CD14-positive monocyte (primary cell): ENCODE measurements at regions of chr19 and their contacts with region 1.

Region 1: DNA sequence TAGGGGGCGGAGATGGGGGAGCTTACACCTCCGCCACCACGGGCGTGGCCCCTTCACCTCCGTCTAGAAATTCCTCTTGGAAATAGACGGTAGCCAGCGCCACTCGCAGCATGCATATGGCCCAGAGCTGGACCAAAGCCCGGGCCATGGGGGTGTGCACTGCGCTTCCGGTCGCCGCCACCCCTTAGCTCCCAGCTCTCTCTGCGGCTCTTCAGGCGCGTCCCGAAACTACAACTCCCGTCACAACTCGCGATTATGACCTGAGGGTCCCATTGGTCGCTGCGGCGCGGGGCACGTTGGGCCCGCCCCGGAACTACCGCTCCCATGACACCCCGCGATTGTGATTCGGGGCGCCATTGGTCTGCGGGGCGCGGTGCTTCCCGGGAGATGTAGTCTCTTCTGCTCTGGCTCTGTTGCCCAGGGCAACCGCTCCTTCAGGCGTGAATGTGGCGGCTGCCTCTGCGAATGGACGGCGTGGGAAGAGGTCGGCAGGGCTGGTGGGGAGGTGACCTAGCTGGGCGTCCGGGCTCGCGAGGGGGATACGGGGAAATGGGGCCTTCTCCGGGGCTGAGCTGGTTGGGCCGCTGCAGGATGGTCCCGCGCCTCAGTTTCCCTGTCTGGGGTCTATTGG is at the starts of genes C19orf44 and CALR3:
- DNase-seq: peak; percentile 97 to 99 (median 97)
- H3K4me3 ChIP-seq: peak within 1 kb of the TSS; percentile 63 to 80 (median 71)
- H3K4me3 Mint-ChIP-seq: peak within 1 kb of the TSS; percentile 87 to 91
- H3K27ac ChIP-seq: peak within 1 kb of the TSS in 1 of 2 donors; percentile 58
- H3K27ac Mint-ChIP-seq: peak within 1 kb of the TSS in 6 of 7 donors; percentile 60 to 85 (median 76)
- H3K4me1 ChIP-seq: peaks cover 10 to 14% of the 10 kb centered on the region in 2 donors
- H3K4me1 Mint-ChIP-seq: peaks cover 10% of the 10 kb centered on the region
- H3K27me3 ChIP-seq: no peaks in the 10 kb centered on the region
- H3K27me3 Mint-ChIP-seq: peaks cover 0 to 1% (median 1%) of the 10 kb centered on the region in 3 donors
- CTCF ChIP-seq: no peak
- polyA plus RNA-seq, gene C19orf44: 0.58 to 0.65 TPM in 2 of 3 donors, not detected in the other
- polyA plus RNA-seq, gene CALR3: not detected

Region 2: DNA sequence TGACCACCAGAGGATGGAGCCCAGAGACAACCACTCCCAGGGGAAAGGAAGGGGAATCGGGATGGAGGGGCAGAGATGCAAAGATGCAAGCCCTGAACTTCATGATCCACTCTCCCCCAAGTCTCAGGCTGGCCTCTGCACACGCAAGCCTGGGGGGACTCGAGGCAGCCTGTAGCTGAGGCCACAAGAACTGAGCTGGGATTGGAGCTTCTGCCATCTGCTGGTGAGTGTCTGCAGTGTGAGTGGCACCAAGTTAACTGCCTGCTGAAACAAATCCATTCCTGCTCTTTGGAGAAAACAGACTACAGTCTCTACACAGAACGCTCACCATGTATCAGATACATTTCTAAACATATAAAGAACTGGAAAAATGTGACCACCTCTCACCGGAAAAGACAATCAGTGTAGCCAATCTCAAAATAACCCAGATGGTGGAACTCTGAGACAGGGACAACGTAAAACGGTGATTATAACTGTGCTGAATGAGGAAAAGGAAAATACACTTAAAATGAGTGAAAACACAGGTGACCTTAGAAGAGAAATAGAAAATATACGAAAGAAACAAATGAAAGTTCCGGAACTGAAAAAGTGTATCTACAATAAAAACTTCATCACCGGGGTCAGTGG is 109.4 kb before region 1 on chr19:
- intact Hi-C with region 1: no loop called
- DNase-seq: peak; percentile 44 to 60 (median 47)
- H3K4me3 ChIP-seq: no peak overlapping the region
- H3K4me3 Mint-ChIP-seq: no peak overlapping the region
- H3K27ac ChIP-seq: no peak overlapping the region
- H3K27ac Mint-ChIP-seq: peak overlapping the region in 1 of 7 donors; percentile 5
- H3K4me1 ChIP-seq: peaks cover 16 to 21% of the 10 kb centered on the region in 2 donors
- H3K4me1 Mint-ChIP-seq: peaks cover 22% of the 10 kb centered on the region
- H3K27me3 ChIP-seq: no peaks in the 10 kb centered on the region
- H3K27me3 Mint-ChIP-seq: no peaks in the 10 kb centered on the region
- CTCF ChIP-seq: peak; percentile 73

Region 3: GRCh38 chr19:16400911-16401591 is 95.0 kb before region 1 on chr19:
- intact Hi-C with region 1: no loop called
- DNase-seq: no peak
- H3K4me3 ChIP-seq: no peak overlapping the region
- H3K4me3 Mint-ChIP-seq: no peak overlapping the region
- H3K27ac ChIP-seq: peak overlapping the region in 1 of 2 donors; percentile 95
- H3K27ac Mint-ChIP-seq: peak overlapping the region; percentile 43 to 90 (median 75)
- H3K4me1 ChIP-seq: peaks cover 13 to 15% of the 10 kb centered on the region in 2 donors
- H3K4me1 Mint-ChIP-seq: peaks cover 11% of the 10 kb centered on the region
- H3K27me3 ChIP-seq: no peaks in the 10 kb centered on the region
- H3K27me3 Mint-ChIP-seq: peaks cover 0 to 4% (median 1%) of the 10 kb centered on the region in 3 donors
- CTCF ChIP-seq: no peak

Region 4: GRCh38 chr19:16446724-16447368 is 49.3 kb before region 1 on chr19:
- intact Hi-C with region 1: loop called in 1 of 2 experiments (anchors 5 kb)
- DNase-seq: peak; percentile 74 to 87 (median 81)
- H3K4me3 ChIP-seq: peak overlapping the region in 1 of 3 experiments; percentile 16
- H3K4me3 Mint-ChIP-seq: peak overlapping the region; percentile 40 to 76
- H3K27ac ChIP-seq: peak overlapping the region; percentile 70 to 81
- H3K27ac Mint-ChIP-seq: peak overlapping the region; percentile 96 to 99 (median 98)
- H3K4me1 ChIP-seq: peaks cover 77 to 83% of the 10 kb centered on the region in 2 donors
- H3K4me1 Mint-ChIP-seq: peaks cover 84% of the 10 kb centered on the region
- H3K27me3 ChIP-seq: no peaks in the 10 kb centered on the region
- H3K27me3 Mint-ChIP-seq: no peaks in the 10 kb centered on the region
- CTCF ChIP-seq: no peak

Region 5: DNA sequence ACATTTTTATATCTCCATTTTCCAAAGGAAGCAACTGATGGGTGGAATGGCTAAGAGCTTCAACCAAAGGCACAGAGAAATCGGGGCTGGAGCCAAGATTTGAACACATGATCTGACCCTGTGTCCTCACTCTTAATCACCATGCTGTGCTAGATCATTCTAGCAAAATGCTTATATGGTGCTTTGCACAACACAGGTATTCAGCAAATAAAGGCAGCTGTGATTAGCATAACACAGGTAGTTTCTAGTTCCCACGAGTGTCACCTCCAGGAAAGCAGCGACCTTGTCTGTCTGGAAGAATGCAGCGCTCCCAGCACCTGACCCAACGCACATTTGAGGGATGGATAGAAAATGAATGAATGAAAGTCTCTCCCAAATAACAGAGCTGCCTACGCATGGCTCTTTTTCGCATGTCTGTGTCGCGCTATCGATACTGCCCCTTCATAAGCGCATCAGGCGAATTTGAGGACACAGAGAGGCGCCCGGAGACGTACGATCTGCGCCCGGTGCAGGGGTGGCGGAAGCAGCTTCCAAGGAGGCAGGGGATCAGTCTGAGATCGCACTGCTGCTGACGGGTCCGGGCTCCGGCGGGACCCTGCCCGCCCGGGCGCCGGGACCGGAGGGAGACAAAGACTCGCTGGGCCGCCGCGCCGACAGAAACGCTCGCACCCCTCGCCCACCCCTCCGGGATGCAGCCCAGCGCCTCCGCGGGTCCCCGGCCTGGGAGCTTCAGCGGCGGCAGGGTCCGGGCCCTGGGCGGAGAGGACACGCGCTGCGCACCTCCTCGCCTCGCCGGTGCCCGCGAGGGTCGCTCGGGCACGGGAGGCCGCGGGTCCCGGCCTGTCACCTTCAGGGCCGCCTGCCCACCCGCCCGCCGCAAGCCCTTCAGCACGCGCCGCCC is 24.9 kb before region 1 on chr19:
- intact Hi-C with region 1: loop called in 1 of 2 experiments (anchors 2 kb)
- DNase-seq: peak in 1 of 3 donors; percentile 16
- H3K4me3 ChIP-seq: peak overlapping the region; percentile 58 to 89 (median 67)
- H3K4me3 Mint-ChIP-seq: peak overlapping the region; percentile 85 to 92
- H3K27ac ChIP-seq: peak overlapping the region in 1 of 2 donors; percentile 59
- H3K27ac Mint-ChIP-seq: peak overlapping the region in 5 of 7 donors; percentile 62 to 82 (median 71)
- H3K4me1 ChIP-seq: peaks cover 22 to 30% of the 10 kb centered on the region in 2 donors
- H3K4me1 Mint-ChIP-seq: peaks cover 31% of the 10 kb centered on the region
- H3K27me3 ChIP-seq: no peaks in the 10 kb centered on the region
- H3K27me3 Mint-ChIP-seq: peaks cover 0 to 2% (median 0%) of the 10 kb centered on the region in 3 donors
- CTCF ChIP-seq: no peak

Region 6: GRCh38 chr19:16542045-16542909 is 46.2 kb after region 1 on chr19 and contains the start of gene CHERP:
- intact Hi-C with region 1: loop called (anchors 5 kb)
- DNase-seq: peak; percentile 91 to 95 (median 93)
- H3K4me3 ChIP-seq: peak within 1 kb of the TSS; percentile 73 to 99 (median 86)
- H3K4me3 Mint-ChIP-seq: peak within 1 kb of the TSS; percentile 87 to 92
- H3K27ac ChIP-seq: peak within 1 kb of the TSS; percentile 63 to 90
- H3K27ac Mint-ChIP-seq: peak within 1 kb of the TSS; percentile 79 to 91 (median 88)
- H3K4me1 ChIP-seq: peaks cover 18 to 26% of the 10 kb centered on the region in 2 donors
- H3K4me1 Mint-ChIP-seq: peaks cover 36% of the 10 kb centered on the region
- H3K27me3 ChIP-seq: no peaks in the 10 kb centered on the region
- H3K27me3 Mint-ChIP-seq: no peaks in the 10 kb centered on the region
- CTCF ChIP-seq: no peak
- polyA plus RNA-seq, gene CHERP: 3.2 to 18.8 (median 5.3) TPM

Region 7: DNA sequence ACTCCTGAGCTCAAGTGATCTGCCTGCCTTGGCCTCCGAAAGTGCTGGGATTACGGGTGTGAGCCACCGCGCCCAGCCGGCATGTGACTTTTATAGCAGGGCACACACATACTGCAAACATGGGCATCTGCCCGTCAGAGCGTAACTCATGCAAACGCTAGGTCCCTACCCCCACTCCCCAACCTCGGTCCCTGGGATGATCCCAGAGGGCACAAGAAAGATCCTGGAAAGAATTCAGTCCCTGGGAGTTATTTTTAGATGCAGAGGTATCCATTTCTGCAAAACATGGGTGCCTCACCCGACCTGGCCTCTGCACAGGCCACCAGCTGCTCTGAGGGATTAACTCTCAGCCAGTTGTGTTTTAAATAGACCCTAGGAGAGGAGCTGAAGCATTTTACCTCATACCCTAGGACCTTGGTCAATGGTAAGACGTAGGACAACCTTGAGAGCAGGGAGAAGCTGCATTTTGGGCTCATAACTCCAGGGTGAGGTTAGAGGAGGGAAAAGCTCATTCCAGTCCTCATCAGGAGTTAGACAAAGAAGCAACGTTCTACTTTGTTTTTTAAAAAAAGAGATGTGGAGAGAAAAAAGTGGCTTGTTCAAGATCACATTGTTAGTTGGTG is 175.7 kb after region 1 on chr19:
- intact Hi-C with region 1: no loop called
- DNase-seq: no peak
- H3K4me3 ChIP-seq: no peak overlapping the region
- H3K4me3 Mint-ChIP-seq: no peak overlapping the region
- H3K27ac ChIP-seq: peak overlapping the region in 1 of 2 donors; percentile 51
- H3K27ac Mint-ChIP-seq: peak overlapping the region in 3 of 7 donors; percentile 3 to 69 (median 30)
- H3K4me1 ChIP-seq: peaks cover 41 to 69% of the 10 kb centered on the region in 2 donors
- H3K4me1 Mint-ChIP-seq: peaks cover 57% of the 10 kb centered on the region
- H3K27me3 ChIP-seq: no peaks in the 10 kb centered on the region
- H3K27me3 Mint-ChIP-seq: peaks cover 1 to 2% (median 1%) of the 10 kb centered on the region in 3 donors
- CTCF ChIP-seq: no peak